CD4-positive, alpha-beta T cell (primary cell): ENCODE measurements at regions of chr17 and their contacts with region 1.

Region 1: DNA sequence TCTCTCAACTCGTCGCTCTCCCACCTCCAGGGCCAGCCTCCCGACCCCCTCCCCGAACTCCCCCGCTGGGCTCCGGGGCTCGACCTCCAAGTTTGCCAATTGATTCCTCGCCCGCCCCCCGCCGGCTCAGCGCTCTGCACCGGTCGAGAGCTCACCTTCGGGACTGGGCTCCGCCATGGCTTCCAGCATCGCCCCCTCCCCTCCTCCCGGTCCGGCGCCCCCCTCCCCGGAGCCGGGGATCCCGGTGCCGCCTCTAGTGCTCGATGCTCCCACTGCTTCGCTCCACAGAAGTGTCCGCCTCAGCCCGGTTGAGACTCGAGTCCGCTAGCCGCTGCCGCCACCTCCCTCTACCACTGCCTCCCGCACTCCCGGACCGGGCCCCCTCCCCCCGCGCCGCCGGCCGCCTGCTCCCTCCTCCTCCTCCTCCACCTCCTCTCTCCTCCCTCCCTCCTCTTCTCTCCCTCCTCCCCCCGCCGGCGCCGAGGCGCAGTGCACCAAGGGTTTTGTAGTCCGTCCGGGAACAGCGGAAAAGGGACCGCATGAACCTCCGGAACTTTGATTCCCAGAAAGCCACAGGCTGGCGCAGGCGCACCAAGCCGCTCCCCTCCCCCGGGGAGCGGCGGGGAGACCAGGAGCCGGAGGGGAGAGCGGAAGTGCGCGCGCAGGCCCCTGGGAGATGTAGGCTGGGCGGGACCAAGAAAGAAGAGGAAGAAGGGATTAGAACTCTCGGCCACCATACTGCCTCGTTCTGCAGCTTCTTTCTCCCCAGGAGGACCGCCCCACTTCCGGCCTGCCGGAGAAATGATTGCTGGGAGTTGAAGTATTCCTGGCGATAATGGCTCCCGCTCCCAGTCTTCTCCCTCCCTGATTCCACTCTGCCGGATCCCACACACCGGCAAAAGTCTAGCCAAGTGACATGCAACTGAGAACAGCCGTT is at the start of gene PHF23:
- DNase-seq: peak; percentile 92 to 99 (median 97)
- ATAC-seq: peak; percentile 66
- H3K4me3 ChIP-seq: peak within 1 kb of the TSS; percentile 93
- H3K4me3 Mint-ChIP-seq: peak within 1 kb of the TSS; percentile 94
- H3K27ac ChIP-seq: peak within 1 kb of the TSS; percentile 88
- H3K27ac Mint-ChIP-seq: peak within 1 kb of the TSS; percentile 93
- H3K4me1 ChIP-seq: peaks cover 63% of the 10 kb centered on the region
- H3K4me1 Mint-ChIP-seq: peaks cover 58% of the 10 kb centered on the region
- H3K27me3 ChIP-seq: no peaks in the 10 kb centered on the region
- H3K27me3 Mint-ChIP-seq: peaks cover 4% of the 10 kb centered on the region
- CTCF ChIP-seq: no peak
- total RNA-seq, gene PHF23: 4.5 to 5.1 TPM

Region 2: DNA sequence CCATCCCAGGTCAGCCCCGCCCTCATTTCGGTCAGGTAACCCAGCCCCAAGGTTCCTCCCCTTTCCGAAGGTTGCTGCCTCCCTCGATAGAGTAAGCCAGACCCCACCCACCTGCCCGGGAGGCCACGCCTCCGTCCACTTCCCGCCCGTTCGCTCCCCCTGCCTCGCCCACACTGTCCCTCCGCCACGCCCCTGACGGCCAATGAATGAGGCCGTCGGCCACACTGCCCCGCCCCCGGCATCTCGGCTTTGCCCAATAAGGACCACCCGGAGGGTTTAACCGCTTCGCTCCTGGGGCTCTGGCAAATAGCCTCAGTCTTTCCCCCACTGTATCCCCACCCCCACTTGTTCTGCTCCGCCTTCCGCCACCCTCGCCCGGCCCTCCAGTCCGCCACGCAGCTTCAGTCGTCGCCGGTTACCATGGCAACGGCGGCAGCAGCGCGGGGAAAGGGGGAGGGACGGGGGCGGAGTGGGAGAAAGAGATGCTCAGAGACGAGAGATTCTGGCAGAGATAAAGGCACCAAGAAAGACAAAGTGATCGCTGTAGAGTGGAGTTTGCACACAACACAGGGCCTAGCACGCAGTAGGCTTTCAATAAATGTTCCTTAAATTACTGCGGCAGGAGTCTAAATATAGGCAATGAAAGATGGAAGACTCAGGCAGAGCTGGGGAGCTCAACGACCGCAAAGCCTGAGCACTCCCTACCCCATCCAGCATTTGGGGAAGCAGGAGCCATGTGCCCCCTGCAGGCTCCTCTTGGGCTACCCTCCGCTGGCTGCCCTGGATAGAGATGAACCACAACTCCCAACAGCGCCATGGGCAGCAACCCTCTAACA is 24.8 kb before region 1 on chr17:
- CTCF ChIA-PET with region 1: interaction called, 20 read pairs
- POLR2A ChIA-PET with region 1: interaction called, 234 read pairs
- intact Hi-C with region 1: loop called in 1 of 2 experiments (anchors 1 kb)
- DNase-seq: peak; percentile 97 to 100 (median 99)
- ATAC-seq: peak; percentile 72
- H3K4me3 ChIP-seq: peak overlapping the region; percentile 64
- H3K4me3 Mint-ChIP-seq: peak overlapping the region; percentile 93
- H3K27ac ChIP-seq: peak overlapping the region; percentile 85 to 99
- H3K27ac Mint-ChIP-seq: peak overlapping the region; percentile 93
- H3K4me1 ChIP-seq: peaks cover 70% of the 10 kb centered on the region
- H3K4me1 Mint-ChIP-seq: peaks cover 70% of the 10 kb centered on the region
- H3K27me3 ChIP-seq: no peaks in the 10 kb centered on the region
- H3K27me3 Mint-ChIP-seq: peaks cover 5% of the 10 kb centered on the region
- CTCF ChIP-seq: peak; percentile 56

Region 3: GRCh38 chr17:7252176-7253043 is 13.1 kb after region 1 on chr17 and contains the start of gene ELP5:
- CTCF ChIA-PET with region 1: interaction called, 4 read pairs
- POLR2A ChIA-PET with region 1: interaction called, 54 read pairs
- intact Hi-C with region 1: loop called (anchors 1 kb)
- DNase-seq: peak; percentile 64 to 99 (median 80)
- ATAC-seq: peak; percentile 39
- H3K4me3 ChIP-seq: peak within 1 kb of the TSS; percentile 71
- H3K4me3 Mint-ChIP-seq: peak within 1 kb of the TSS; percentile 94
- H3K27ac ChIP-seq: peak within 1 kb of the TSS; percentile 99
- H3K27ac Mint-ChIP-seq: peak within 1 kb of the TSS; percentile 100
- H3K4me1 ChIP-seq: peaks cover 36% of the 10 kb centered on the region
- H3K4me1 Mint-ChIP-seq: peaks cover 45% of the 10 kb centered on the region
- H3K27me3 ChIP-seq: no peaks in the 10 kb centered on the region
- H3K27me3 Mint-ChIP-seq: no peaks in the 10 kb centered on the region
- CTCF ChIP-seq: peak; percentile 28
- total RNA-seq, gene ELP5: 20.1 to 21.3 TPM

Region 4: DNA sequence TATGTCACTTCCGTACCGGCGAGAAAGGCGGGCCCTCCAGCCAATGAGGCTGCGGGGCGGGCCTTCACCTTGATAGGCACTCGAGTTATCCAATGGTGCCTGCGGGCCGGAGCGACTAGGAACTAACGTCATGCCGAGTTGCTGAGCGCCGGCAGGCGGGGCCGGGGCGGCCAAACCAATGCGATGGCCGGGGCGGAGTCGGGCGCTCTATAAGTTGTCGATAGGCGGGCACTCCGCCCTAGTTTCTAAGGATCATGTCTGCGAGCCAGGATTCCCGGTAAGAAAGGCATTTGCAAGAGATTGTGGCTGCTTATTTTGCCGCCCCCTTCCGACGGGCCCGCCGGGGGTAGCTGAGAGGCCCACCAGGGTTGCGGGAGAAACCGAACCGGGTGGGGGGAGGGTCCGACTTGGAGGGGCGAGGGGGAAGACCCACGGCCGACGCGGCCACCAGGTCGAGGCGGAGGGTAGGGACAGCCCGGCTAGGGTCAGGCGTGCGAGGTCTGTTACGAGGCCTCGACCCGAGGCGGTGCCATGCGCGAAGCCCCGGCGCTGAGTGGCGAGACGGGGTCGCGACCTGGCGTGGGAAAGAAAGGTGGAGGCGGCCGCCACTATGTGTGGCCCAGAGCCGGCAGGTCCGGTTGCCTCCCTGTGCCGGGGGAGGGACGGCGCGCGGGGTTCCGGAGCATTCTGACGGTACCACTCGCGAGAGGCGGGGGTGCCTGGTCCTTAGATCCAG is 333.4 kb after region 1 on chr17:
- CTCF ChIA-PET with region 1: no interaction called
- POLR2A ChIA-PET with region 1: interaction called, 3 read pairs
- intact Hi-C with region 1: loop called in 1 of 2 experiments (anchors 1 kb)
- DNase-seq: peak; percentile 99 to 100 (median 100)
- ATAC-seq: peak; percentile 83
- H3K4me3 ChIP-seq: peak overlapping the region; percentile 100
- H3K4me3 Mint-ChIP-seq: peak overlapping the region; percentile 99
- H3K27ac ChIP-seq: peak overlapping the region; percentile 96 to 98
- H3K27ac Mint-ChIP-seq: peak overlapping the region; percentile 99
- H3K4me1 ChIP-seq: peaks cover 50% of the 10 kb centered on the region
- H3K4me1 Mint-ChIP-seq: peaks cover 52% of the 10 kb centered on the region
- H3K27me3 ChIP-seq: no peaks in the 10 kb centered on the region
- H3K27me3 Mint-ChIP-seq: peaks cover 3% of the 10 kb centered on the region
- CTCF ChIP-seq: no peak

Region 5: GRCh38 chr17:7844292-7845154 is 605.2 kb after region 1 on chr17:
- CTCF ChIA-PET with region 1: no interaction called
- POLR2A ChIA-PET with region 1: interaction called, 3 read pairs
- intact Hi-C with region 1: loop called (anchors 10 kb)
- DNase-seq: peak; percentile 56 to 94 (median 73)
- ATAC-seq: peak; percentile 14
- H3K4me3 ChIP-seq: peak overlapping the region; percentile 84
- H3K4me3 Mint-ChIP-seq: peak overlapping the region; percentile 92
- H3K27ac ChIP-seq: peak overlapping the region; percentile 100
- H3K27ac Mint-ChIP-seq: peak overlapping the region; percentile 90
- H3K4me1 ChIP-seq: peaks cover 59% of the 10 kb centered on the region
- H3K4me1 Mint-ChIP-seq: peaks cover 35% of the 10 kb centered on the region
- H3K27me3 ChIP-seq: no peaks in the 10 kb centered on the region
- H3K27me3 Mint-ChIP-seq: peaks cover 10% of the 10 kb centered on the region
- CTCF ChIP-seq: no peak